ENCODE measurements at regions of chr1 and their contacts with region 1.

Region 1: DNA sequence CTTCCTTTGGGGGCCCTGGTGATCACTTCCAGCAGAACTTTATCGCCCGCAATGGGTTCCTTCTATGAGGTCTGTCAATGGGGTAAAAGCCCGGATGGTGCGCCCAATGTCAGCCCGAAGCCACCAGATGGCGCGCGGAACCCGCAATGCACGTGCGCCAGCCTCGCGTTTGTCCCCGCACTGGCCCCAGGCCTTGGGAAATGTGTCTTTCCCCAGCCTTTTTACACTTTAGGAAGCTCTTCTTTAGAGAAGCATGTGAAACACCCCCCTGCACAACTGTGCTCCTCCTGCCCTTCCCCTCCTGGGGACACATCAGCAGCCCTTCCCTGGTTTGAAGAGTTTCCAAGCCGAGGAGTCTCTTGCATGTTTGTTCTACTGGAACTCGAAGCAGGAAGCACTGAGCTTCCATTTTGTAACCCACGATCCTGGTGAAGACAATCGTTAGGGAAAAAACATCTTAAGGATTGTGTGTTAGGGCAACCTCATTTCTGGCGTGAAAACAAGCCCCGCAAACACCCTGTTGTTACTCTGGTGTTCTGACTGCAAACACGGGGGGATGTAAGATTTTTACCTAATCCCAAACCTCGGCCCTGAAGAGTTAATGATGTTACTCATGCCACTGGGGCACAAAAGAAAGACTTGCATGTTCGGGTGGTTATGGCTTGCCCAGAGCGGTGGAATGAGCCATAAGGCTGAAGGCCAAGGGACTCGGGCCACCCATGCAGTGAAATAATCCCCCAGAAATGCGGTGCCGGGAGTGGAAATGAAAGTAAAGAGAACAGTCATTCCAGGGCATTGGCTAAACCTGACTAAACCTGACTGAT is 20.4 kb upstream of the TARBP1 start:
- DNase-seq: peak; percentile 95
- H3K4me3 Mint-ChIP-seq: peak overlapping the region; percentile 51
- H3K27ac Mint-ChIP-seq: peak overlapping the region; percentile 97
- H3K4me1 Mint-ChIP-seq: peaks cover 87% of the 10 kb centered on the region
- H3K27me3 Mint-ChIP-seq: no peaks in the 10 kb centered on the region
- CTCF ChIP-seq: peak; percentile 93

Region 2: DNA sequence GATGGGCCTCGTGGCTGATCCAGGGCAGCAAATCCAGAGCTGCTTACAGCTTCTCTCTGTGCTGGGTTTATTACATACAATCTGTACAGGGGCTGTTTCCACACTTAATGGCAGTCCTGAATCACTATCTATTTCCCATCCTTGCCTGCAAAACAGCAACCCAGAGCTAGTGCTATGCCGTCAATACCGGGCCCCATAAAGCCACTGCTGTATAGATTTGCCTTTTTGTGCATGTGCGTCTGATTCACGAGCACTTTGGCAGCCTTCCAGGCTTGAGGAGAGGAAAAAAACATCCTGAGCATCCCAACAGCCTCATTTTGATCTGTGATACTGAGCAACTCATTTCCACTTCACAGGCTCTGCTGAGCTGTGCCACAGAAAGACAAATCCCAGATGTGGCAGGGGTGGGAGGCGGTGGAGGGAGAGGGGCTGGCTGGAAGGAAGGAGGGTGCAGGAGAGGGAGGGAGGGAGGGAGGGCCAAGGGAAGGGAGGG is 44.8 kb after region 1 on chr1:
- CTCF ChIA-PET with region 1: interaction called, 4 read pairs
- intact Hi-C with region 1: loop called (anchors 2 kb)
- DNase-seq: peak; percentile 63
- H3K4me3 Mint-ChIP-seq: no peak overlapping the region
- H3K27ac Mint-ChIP-seq: peak overlapping the region; percentile 33
- H3K4me1 Mint-ChIP-seq: peaks cover 38% of the 10 kb centered on the region
- H3K27me3 Mint-ChIP-seq: peaks cover 11% of the 10 kb centered on the region
- CTCF ChIP-seq: no peak

Region 3: DNA sequence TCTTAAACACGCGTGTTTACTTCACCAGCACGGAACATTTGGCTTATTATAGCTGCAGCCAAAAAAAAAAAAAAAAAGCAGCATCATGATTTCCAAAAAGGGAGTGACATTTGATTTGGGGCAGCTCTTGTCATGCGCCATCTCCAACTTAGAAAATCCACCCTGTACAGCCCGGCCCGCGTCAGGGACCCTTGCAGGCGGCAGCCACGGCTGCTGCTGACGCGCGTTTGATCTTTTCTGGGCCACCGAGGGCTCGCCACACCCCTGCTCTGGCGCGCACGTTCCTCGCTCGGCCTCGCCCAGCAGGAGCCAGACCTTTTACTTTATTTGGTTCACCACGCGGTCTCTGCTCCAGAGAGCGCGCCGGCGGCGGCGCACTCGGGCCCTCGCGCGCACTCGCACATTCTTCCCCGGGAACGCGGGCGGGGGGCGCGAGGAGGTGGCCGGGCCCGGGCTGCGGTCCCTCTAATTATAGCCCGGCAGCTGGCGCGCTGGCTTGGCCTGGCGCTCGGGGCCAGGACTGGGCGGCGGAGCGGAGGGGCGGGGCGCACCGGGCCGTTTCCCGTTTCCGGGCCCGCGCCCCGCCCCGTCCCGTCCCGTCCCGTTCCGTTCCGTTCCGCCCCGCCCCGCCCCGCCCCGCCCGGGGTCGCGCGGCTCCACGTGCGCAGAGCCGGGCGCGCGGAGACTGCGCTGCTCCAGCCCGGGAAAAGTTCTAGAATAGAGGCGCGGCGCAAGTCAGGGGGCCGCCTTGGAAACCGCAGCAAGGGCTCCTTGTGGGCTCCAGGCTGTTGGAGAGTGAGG is 100.5 kb after region 1 on chr1:
- CTCF ChIA-PET with region 1: interaction called, 11 read pairs
- intact Hi-C with region 1: loop called (anchors 2 kb)
- DNase-seq: peak; percentile 95
- H3K4me3 Mint-ChIP-seq: peak overlapping the region; percentile 81
- H3K27ac Mint-ChIP-seq: peak overlapping the region; percentile 91
- H3K4me1 Mint-ChIP-seq: peaks cover 42% of the 10 kb centered on the region
- H3K27me3 Mint-ChIP-seq: no peaks in the 10 kb centered on the region
- CTCF ChIP-seq: no peak

Region 4: DNA sequence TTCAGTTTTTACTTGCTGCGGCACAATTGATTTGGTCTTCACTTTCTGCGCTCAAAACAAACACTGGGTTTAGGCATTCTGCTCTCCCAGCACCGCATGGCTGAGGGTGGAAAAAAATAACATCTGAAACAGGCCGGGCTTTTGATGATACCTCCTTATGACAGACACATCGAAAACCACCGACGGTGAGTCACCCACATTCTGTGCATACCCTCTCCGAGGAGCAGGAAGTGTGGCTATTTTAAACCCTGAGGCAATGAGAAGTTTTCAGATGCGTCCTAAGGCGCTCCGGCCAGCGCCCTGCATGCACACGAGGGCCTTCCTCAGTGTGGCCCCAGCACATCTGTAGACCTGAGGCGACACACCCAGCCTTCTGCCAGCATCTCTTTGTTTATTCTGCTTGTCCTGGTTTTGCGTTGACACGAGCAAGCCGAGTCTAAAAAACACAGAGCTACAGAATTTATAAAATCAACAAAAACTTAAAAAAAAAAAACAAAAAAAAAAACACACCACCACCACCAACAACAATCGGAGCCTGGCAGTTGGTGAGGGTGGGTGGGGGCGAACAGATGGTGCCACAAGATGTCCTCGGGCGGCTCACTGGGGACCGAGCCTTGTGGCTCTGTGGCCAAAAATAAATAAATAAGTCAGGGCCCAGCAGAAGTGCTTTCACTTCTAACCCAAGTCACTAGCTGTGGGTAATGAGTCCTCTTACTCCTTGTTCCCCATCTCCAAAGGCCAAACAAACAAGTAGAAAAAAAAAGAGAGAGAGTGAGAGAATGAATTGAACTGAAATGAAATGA is 273.2 kb after region 1 on chr1:
- CTCF ChIA-PET with region 1: no interaction called
- intact Hi-C with region 1: loop called (anchors 5 kb)
- DNase-seq: peak; percentile 93
- H3K4me3 Mint-ChIP-seq: peak overlapping the region; percentile 34
- H3K27ac Mint-ChIP-seq: peak overlapping the region; percentile 93
- H3K4me1 Mint-ChIP-seq: peaks cover 32% of the 10 kb centered on the region
- H3K27me3 Mint-ChIP-seq: no peaks in the 10 kb centered on the region
- CTCF ChIP-seq: no peak

Region 5: DNA sequence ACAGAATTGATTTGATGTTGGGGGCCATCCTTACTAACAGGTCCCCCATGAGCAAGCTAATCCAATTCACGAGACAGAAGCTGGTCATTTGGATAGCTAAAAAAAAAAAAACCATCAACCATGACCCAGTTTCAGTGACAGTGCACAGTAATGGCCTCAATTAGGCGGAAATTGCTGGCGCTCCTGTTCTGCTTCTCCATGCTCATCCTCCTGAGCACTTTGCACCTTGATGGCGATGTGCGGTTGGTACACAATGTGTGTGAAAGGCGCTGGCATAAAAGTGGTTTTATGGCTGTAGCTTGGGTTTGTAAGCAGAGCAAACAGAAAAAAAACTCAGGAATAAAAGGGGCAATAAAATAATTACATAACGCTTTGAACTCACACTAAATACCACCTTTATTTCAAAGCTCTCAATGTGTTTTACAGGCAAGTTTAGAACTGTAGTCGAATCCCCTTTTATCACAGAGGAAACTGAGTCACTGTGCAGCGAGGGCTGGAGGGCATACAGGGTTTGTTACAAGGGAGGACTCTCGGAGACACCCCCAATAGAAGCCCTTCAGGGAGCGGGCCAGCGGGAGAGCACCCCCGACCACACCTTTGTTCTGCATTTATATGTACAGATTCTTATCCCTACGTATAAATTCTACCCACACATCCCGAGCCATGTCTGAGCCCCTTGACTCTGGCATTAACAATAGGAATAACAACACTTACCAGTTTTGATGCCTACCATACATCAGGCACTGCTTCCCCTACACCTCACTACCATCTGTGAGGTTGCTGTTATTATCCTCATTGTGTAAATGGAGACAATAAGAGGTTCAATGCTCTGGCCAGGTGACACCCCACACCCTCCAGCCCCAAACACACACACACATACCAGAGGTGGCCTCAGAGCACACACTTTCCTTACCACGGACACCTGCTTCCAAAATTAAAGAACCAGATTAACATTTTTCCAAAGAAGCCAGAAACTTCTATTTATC is 324.2 kb after region 1 on chr1:
- CTCF ChIA-PET with region 1: no interaction called
- intact Hi-C with region 1: loop called (anchors 5 kb)
- DNase-seq: no peak
- H3K4me3 Mint-ChIP-seq: no peak overlapping the region
- H3K27ac Mint-ChIP-seq: no peak overlapping the region
- H3K4me1 Mint-ChIP-seq: peaks cover 20% of the 10 kb centered on the region
- H3K27me3 Mint-ChIP-seq: no peaks in the 10 kb centered on the region
- CTCF ChIP-seq: no peak

Region 6: DNA sequence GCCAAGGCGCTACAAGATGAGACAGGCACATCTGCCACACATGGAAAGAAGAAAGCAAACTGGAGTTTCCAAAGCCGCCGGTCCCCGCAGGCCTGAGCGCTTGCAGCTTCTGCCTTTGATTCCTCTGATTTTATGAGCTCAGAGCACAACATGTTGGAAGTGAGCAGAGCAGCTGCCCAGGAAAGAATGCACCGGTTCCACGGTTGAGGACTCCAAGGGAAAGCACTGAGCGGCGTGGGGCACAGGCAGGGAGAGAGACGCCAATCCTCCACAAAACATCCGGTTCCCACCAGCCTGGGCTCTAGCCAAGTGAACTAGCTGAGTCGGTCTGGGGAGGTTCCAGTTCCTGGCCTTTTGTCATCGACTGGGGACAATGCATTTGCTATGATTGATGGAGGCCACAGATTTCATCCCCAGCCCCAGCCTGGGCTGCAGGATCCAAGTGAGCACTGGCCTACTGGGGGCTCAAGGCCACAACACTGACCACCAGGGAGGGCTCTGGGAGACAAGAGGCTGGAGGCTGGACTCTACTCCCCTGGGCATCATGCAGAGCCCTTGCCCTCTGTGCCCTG is 363.7 kb after region 1 on chr1:
- CTCF ChIA-PET with region 1: no interaction called
- intact Hi-C with region 1: loop called (anchors 5 kb)
- DNase-seq: no peak
- H3K4me3 Mint-ChIP-seq: no peak overlapping the region
- H3K27ac Mint-ChIP-seq: no peak overlapping the region
- H3K4me1 Mint-ChIP-seq: peaks cover 56% of the 10 kb centered on the region
- H3K27me3 Mint-ChIP-seq: no peaks in the 10 kb centered on the region
- CTCF ChIP-seq: no peak

Region 7: GRCh38 chr1:235093696-235094592 is 594.6 kb after region 1 on chr1:
- CTCF ChIA-PET with region 1: interaction called, 25 read pairs
- intact Hi-C with region 1: loop called (anchors 1 kb)
- DNase-seq: peak; percentile 87
- H3K4me3 Mint-ChIP-seq: peak overlapping the region; percentile 13
- H3K27ac Mint-ChIP-seq: peak overlapping the region; percentile 52
- H3K4me1 Mint-ChIP-seq: peaks cover 15% of the 10 kb centered on the region
- H3K27me3 Mint-ChIP-seq: no peaks in the 10 kb centered on the region
- CTCF ChIP-seq: peak; percentile 87

Measured in Calu3 (cell line).